K562 (cell line): ENCODE measurements at regions of chr20 and their contacts with region 1.

Region 1: DNA sequence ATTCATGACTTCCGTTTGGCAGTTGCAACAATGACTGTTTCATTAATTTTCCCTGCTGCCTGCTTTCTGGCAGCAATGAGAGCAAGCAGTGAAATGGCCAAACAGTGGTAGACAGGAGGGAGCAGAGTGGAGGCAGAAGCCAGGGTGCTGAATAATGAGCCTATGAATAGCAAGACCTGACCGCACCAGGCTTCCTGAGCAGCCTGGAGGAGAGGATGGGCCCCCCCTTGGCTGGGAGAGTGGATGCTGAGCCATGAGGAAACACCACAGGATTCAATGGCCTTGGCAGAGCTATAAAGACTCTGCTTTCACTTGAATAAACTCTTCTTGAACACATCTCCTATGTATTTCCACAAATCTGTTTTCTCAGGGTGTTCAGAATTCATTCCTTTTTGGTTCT is 68.1 kb upstream of the SNRPB2 start:
- DNase-seq: no peak
- ATAC-seq: no peak
- H3K4me3 ChIP-seq: no peak overlapping the region
- H3K27ac ChIP-seq: no peak overlapping the region
- H3K4me1 ChIP-seq: no peaks in the 10 kb centered on the region; a peak in 1 of 5 replicates
- H3K27me3 ChIP-seq: no peaks in the 10 kb centered on the region
- CTCF ChIP-seq: no peak
- EP300 ChIP-seq: no peak
- POLR2A ChIP-seq: no peak
- RAD21 ChIP-seq: no peak

Region 2: GRCh38 chr20:16691381-16691780 is 29.6 kb after region 1 on chr20:
- CTCF ChIA-PET with region 1: no interaction called
- POLR2A ChIA-PET with region 1: no interaction called
- in situ Hi-C with region 1: no loop called
- intact Hi-C with region 1: loop called (anchors 1 kb)
- DNase-seq: no peak
- ATAC-seq: no peak
- H3K4me3 ChIP-seq: no peak overlapping the region
- H3K27ac ChIP-seq: no peak overlapping the region
- H3K4me1 ChIP-seq: no peaks in the 10 kb centered on the region
- H3K27me3 ChIP-seq: no peaks in the 10 kb centered on the region
- CTCF ChIP-seq: no peak
- EP300 ChIP-seq: no peak
- POLR2A ChIP-seq: no peak
- RAD21 ChIP-seq: no peak

Region 3: DNA sequence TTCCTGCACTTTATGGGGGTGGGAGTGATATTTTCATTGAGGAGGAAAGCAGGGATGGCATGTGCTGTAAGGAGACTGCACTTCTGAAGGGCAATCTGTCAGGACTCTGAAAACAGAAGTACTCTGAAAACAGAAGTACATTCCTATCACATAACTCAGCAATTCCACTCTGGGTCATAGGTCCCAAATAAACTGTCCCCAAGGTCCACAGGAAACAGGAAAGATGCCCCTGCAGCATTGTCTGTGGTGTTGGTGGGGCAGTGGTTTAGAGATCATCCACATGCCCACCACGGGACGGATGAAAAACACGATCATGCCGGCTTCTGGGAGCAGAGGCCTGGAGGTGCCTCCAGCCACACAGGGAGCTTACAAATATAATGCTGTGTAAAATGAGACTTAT is 236.7 kb after region 1 on chr20:
- CTCF ChIA-PET with region 1: no interaction called
- POLR2A ChIA-PET with region 1: no interaction called
- in situ Hi-C with region 1: no loop called
- intact Hi-C with region 1: no loop called
- DNase-seq: no peak
- ATAC-seq: no peak
- H3K4me3 ChIP-seq: no peak overlapping the region
- H3K27ac ChIP-seq: no peak overlapping the region
- H3K4me1 ChIP-seq: no peaks in the 10 kb centered on the region
- H3K27me3 ChIP-seq: no peaks in the 10 kb centered on the region
- CTCF ChIP-seq: no peak
- EP300 ChIP-seq: no peak
- POLR2A ChIP-seq: no peak
- RAD21 ChIP-seq: no peak